ENCODE measurements at regions of chr17 and their contacts with region 1.

Region 1: DNA sequence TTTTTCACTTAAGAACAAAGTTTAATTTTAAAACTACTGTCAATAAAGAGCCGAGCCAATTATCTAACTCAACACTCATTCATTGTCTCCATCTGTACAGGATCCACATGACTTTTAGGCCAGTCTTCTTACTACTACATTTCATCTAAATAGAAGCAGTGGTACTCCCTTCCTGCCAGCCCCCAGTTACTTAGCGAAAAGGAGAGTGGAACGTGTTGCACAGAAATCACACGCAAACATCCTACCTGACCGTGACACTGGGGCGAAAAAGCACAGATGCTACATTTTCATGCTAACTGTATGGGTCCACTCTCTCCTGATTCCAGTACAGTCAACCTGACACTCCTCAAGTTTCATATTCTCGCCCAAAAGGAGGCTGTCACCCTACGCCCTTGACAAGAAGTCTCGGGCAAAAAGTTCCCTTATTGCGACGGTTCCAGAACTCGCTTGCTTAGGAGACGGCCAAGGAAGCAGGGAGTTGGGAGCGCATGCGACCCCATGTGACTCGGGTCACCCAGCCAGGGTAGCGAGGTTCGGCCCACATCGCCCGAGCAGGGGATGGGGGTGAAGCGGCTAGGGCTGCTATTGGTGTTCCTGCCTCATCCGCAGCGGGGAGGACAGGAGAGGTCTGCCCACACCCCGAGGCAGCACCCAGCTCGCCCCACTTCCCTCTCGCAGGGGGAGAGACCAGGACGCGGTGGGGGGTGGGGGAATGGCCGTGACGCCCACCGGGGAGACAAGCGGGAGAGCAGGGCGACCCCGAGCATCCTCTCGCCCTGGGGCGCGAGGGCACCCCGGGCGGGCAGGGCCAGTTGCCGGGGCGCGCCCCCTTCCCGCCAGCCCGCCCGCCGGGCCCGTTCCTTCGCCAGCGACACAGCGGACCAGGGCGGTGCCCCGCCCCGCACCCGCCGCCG is 935 bp downstream of the GNA13 start:
- DNase-seq: peak; percentile 27 to 69 (median 40)
- ATAC-seq: peak; percentile 17
- H3K4me3 ChIP-seq: peak overlapping the region; percentile 94
- H3K4me3 Mint-ChIP-seq: peak overlapping the region; percentile 89 to 100 (median 96)
- H3K27ac ChIP-seq: peak overlapping the region; percentile 99
- H3K27ac Mint-ChIP-seq: peak overlapping the region; percentile 93 to 99 (median 96)
- H3K4me1 ChIP-seq: peaks cover 17 to 20% of the 10 kb centered on the region in 2 donors
- H3K4me1 Mint-ChIP-seq: peaks cover 33 to 58% (median 47%) of the 10 kb centered on the region in 7 donors
- H3K27me3 ChIP-seq: no peaks in the 10 kb centered on the region
- H3K27me3 Mint-ChIP-seq: peaks cover 0 to 10% (median 0%) of the 10 kb centered on the region in 5 donors

Region 2: GRCh38 chr17:64661976-64662773 is 393.4 kb before region 1 on chr17 and contains the start of gene SMURF2:
- CTCF ChIA-PET with region 1: no interaction called
- POLR2A ChIA-PET with region 1: no interaction called
- intact Hi-C with region 1: loop called in 1 of 2 experiments (anchors 5 kb)
- DNase-seq: peak; percentile 72 to 84 (median 80)
- ATAC-seq: peak; percentile 96
- H3K4me3 ChIP-seq: peak within 1 kb of the TSS; percentile 77
- H3K4me3 Mint-ChIP-seq: peak within 1 kb of the TSS; percentile 87 to 99 (median 98)
- H3K27ac ChIP-seq: peak within 1 kb of the TSS; percentile 72
- H3K27ac Mint-ChIP-seq: peak within 1 kb of the TSS; percentile 85 to 96 (median 95)
- H3K4me1 ChIP-seq: peaks cover 12 to 18% of the 10 kb centered on the region in 2 donors
- H3K4me1 Mint-ChIP-seq: peaks cover 28 to 42% (median 34%) of the 10 kb centered on the region in 7 donors
- H3K27me3 ChIP-seq: no peaks in the 10 kb centered on the region
- H3K27me3 Mint-ChIP-seq: no peaks in the 10 kb centered on the region
- total RNA-seq, gene SMURF2: 17.0 to 35.7 (median 32.1) TPM

Region 3: GRCh38 chr17:64975329-64976087 is 80.1 kb before region 1 on chr17:
- CTCF ChIA-PET with region 1: interaction called, 4 read pairs
- POLR2A ChIA-PET with region 1: interaction called, 37 read pairs
- intact Hi-C with region 1: loop called (anchors 1 kb)
- DNase-seq: peak; percentile 94 to 99 (median 98)
- ATAC-seq: peak; percentile 92
- H3K4me3 ChIP-seq: peak overlapping the region; percentile 82
- H3K4me3 Mint-ChIP-seq: peak overlapping the region; percentile 88 to 100 (median 96)
- H3K27ac ChIP-seq: peak overlapping the region; percentile 99
- H3K27ac Mint-ChIP-seq: peak overlapping the region; percentile 96 to 100 (median 99)
- H3K4me1 ChIP-seq: peaks cover 8 to 27% of the 10 kb centered on the region in 2 donors
- H3K4me1 Mint-ChIP-seq: peaks cover 19 to 50% (median 33%) of the 10 kb centered on the region in 7 donors
- H3K27me3 ChIP-seq: no peaks in the 10 kb centered on the region
- H3K27me3 Mint-ChIP-seq: no peaks in the 10 kb centered on the region

Region 4: DNA sequence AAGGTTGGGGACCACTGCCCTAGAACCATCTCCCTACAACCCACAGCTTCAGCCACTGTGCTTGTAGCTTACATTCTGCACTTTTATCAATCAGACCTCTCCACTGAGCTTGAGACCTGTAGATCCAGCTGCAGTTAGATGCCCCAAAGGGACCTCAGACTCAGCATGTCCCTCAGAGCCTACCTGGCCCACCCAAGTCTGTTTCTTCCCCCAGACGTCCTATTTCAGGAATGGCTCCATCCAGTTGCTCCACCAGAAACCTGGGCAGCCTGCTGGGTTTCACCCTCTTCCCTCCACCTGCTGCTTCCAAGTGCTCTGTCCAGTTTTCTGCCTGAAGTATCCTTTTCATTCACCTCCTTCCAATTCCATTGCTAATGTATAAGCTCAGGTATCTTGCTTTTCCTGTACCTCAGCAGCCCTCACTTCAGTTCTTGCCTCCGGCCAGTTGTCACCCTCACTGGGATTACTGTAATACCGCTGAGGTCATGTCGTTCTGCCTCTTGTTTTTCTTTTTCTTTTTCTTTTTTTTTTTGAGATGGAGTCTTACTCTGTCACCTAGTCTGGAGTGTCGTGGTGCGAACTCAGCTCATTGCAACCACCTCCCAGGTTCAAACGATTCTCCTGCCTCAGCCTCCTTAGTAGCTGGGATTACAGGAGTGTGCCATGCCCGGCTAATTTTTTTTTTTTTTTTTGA is 54.0 kb before region 1 on chr17:
- CTCF ChIA-PET with region 1: no interaction called
- POLR2A ChIA-PET with region 1: no interaction called
- intact Hi-C with region 1: no loop called
- DNase-seq: no peak
- ATAC-seq: no peak
- H3K4me3 ChIP-seq: no peak overlapping the region
- H3K4me3 Mint-ChIP-seq: no peak overlapping the region
- H3K27ac ChIP-seq: no peak overlapping the region
- H3K27ac Mint-ChIP-seq: peak overlapping the region in 1 of 9 donors; percentile 10
- H3K4me1 ChIP-seq: no peaks in the 10 kb centered on the region
- H3K4me1 Mint-ChIP-seq: peaks cover 0 to 8% (median 0%) of the 10 kb centered on the region in 7 donors
- H3K27me3 ChIP-seq: no peaks in the 10 kb centered on the region
- H3K27me3 Mint-ChIP-seq: peaks cover 0 to 13% (median 0%) of the 10 kb centered on the region in 5 donors

Region 5: DNA sequence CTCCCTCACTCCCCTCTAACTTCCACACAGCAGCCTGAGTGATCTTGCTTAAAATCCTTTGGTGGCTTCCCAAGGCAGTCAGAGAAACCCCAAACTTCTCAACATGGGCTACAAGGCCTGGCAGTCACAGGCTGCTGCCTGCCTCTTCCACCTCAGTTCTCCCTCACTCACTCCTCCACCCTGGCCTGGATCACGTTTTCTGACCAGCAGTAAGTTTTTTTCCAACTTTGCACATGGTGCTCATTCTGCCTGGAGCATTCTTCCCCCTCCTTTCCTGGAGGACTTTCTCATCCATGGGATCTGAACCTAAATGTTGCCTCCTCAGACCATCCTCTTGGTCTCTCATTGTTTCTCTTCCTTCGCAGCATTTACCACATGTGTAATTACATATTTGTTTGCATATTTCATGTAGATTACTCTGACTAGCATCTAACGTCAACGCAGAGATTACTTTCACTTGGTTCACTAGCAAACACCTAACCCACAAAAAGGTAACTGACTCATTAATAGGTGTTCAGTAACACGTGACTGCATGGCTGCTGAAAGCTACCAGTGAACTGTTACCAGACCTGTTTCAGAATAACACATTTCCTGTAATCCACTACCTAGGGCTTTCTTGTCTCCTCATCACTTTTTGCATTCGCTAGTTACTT is 16.1 kb before region 1 on chr17:
- CTCF ChIA-PET with region 1: no interaction called
- POLR2A ChIA-PET with region 1: interaction called, 12 read pairs
- intact Hi-C with region 1: loop called (anchors 1 kb)
- DNase-seq: peak in 7 of 9 donors; percentile 55 to 85 (median 77)
- ATAC-seq: peak; percentile 95
- H3K4me3 ChIP-seq: peak overlapping the region; percentile 18
- H3K4me3 Mint-ChIP-seq: peak overlapping the region; percentile 34 to 92 (median 78)
- H3K27ac ChIP-seq: peak overlapping the region; percentile 79
- H3K27ac Mint-ChIP-seq: peak overlapping the region; percentile 78 to 97 (median 93)
- H3K4me1 ChIP-seq: peaks cover 55 to 68% of the 10 kb centered on the region in 2 donors
- H3K4me1 Mint-ChIP-seq: peaks cover 67 to 90% (median 83%) of the 10 kb centered on the region in 7 donors
- H3K27me3 ChIP-seq: no peaks in the 10 kb centered on the region
- H3K27me3 Mint-ChIP-seq: no peaks in the 10 kb centered on the region

Region 6: DNA sequence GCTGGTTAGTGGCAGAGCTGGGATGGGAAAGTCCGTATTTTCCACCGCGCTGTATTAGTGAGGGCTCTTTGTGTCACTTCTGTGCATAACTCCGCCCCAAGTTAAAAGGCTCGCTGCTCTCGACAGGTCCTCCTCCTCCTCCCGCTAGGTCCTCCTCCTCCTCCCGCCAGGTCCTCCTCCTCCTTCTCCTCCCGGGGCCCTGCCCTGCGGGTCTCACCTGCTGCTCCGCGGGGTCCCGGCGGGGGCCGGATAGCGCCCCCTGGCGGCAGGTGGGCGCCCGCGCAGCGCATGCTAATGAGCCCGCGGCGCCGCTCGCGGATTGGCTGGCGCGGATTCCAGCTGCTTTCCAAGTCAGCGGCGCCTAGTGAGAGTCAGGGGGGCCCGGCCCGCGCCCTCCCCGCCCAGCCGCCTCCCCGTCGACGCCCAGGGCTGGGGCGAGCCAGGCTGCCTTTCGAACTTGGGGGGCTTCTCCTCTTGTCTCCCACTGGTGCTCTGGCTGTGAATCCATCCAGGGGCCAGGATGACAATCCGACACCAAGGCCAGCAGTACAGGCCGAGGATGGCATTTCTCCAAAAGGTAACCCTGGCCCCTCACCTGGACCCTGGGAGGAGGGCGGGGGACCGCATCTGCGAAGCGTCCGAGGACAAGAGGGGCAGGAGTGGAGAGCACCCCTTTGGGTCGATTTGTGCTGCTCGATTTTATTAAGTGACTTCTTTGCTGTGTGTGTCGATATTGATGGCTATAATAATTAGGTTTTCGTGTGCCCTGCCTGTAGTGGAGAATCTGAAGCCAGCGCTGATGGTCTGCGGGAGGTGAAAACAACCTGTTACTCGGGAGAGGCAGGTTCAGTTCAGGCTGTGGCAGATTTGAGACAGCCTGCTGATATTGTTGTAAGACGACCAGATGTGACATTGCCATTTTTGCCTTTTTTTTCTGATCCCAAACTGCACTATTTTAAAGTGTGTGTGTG is 81.7 kb after region 1 on chr17 and contains the start of gene RGS9:
- CTCF ChIA-PET with region 1: no interaction called
- POLR2A ChIA-PET with region 1: no interaction called
- intact Hi-C with region 1: loop called in 1 of 2 experiments (anchors 2 kb)
- DNase-seq: peak; percentile 77 to 90 (median 86)
- ATAC-seq: peak; percentile 99
- H3K4me3 ChIP-seq: peak within 1 kb of the TSS; percentile 69
- H3K4me3 Mint-ChIP-seq: peak within 1 kb of the TSS; percentile 67 to 91 (median 82)
- H3K27ac ChIP-seq: peak within 1 kb of the TSS; percentile 56
- H3K27ac Mint-ChIP-seq: peak within 1 kb of the TSS; percentile 45 to 87 (median 75)
- H3K4me1 ChIP-seq: peaks cover 12 to 27% of the 10 kb centered on the region in 2 donors
- H3K4me1 Mint-ChIP-seq: peaks cover 10 to 40% (median 22%) of the 10 kb centered on the region in 7 donors
- H3K27me3 ChIP-seq: no peaks in the 10 kb centered on the region
- H3K27me3 Mint-ChIP-seq: peaks cover 8 to 31% (median 18%) of the 10 kb centered on the region in 5 donors
- total RNA-seq, gene RGS9: 0.32 to 3.9 (median 0.81) TPM

Region 7: DNA sequence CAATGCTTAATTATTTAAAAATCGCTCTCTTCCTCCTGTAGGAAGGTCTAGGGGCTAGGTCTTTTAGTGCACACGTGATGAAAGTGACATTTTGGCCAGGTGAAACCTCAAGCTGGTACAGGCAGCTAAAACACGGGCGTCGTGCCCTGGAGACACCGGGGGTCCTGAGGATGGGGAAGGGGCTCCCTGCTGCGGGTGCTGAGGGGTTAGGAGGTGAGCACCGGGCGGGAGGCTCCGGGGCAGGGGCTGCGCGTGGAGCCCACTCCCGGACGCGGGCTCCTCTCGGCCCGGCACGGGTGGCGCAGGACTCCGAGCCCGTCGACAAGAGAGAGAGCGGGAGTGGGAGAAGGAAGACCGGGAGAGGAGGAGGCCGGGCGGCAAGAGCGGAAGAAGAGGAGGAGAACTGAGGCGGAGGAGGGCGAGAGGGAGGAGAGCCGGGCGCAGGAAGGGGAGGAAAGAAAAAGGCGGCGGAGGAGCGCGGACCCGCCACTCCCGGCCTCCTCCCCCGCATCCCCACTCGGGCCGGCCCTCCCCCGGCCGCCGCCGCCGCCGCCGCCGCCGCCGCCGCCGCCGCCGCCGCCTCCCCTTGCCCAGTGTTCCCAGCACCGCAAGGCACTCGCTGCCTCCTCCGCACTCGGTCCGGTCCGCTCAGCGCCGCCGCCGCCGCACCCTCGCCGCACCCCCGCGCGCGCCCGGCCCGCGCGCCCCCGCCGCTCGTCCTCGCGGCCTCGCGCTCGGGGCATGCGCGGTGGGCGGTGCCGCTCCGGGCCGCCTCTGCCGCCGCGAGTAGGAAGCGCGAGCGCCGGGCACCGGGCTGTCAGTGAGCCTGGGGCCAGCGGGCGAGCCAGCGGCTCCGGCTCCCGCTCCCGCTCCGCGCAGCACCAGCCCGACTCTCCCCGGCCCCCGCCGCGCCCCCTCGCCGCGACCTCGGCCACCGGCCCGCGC is 1246.5 kb after region 1 on chr17 and contains the start of gene PRKCA:
- CTCF ChIA-PET with region 1: no interaction called
- POLR2A ChIA-PET with region 1: no interaction called
- intact Hi-C with region 1: loop called in 1 of 2 experiments (anchors 5 kb)
- DNase-seq: peak; percentile 59 to 85 (median 71)
- ATAC-seq: peak; percentile 91
- H3K4me3 ChIP-seq: peak within 1 kb of the TSS; percentile 61
- H3K4me3 Mint-ChIP-seq: peak within 1 kb of the TSS; percentile 96 to 100 (median 99)
- H3K27ac ChIP-seq: peak within 1 kb of the TSS; percentile 75
- H3K27ac Mint-ChIP-seq: peak within 1 kb of the TSS; percentile 92 to 98 (median 96)
- H3K4me1 ChIP-seq: peaks cover 7 to 21% of the 10 kb centered on the region in 2 donors
- H3K4me1 Mint-ChIP-seq: peaks cover 29 to 68% (median 59%) of the 10 kb centered on the region in 7 donors
- H3K27me3 ChIP-seq: no peaks in the 10 kb centered on the region
- H3K27me3 Mint-ChIP-seq: peaks cover 0 to 9% (median 0%) of the 10 kb centered on the region in 5 donors
- total RNA-seq, gene PRKCA: 94.1 to 186 (median 154) TPM

Measured in naive thymus-derived CD4-positive, alpha-beta T cell (primary cell).